Activated CD4-positive, alpha-beta T cell treated with anti-CD3 and anti-CD28 coated beads, Interleukin-2, amount 10 ng/mL, durations not matched to agents 24 days and 14 days (primary cell): ENCODE measurements at regions of chrX and their contacts with region 1.

Region 1: GRCh38 chrX:135432881-135433521 is 11.3 kb downstream of the SMIM10L2A start:
- DNase-seq: no peak
- H3K4me3 Mint-ChIP-seq: no peak overlapping the region
- H3K27ac Mint-ChIP-seq: no peak overlapping the region
- H3K4me1 Mint-ChIP-seq: peaks cover 10% of the 10 kb centered on the region
- H3K27me3 Mint-ChIP-seq: peaks cover 6% of the 10 kb centered on the region

Region 2: GRCh38 chrX:135384161-135384836 is 48.7 kb before region 1 on chrX:
- intact Hi-C with region 1: loop called (anchors 5 kb)
- DNase-seq: peak; percentile 85
- H3K4me3 Mint-ChIP-seq: peak overlapping the region; percentile 75
- H3K27ac Mint-ChIP-seq: peak overlapping the region; percentile 85
- H3K4me1 Mint-ChIP-seq: peaks cover 33% of the 10 kb centered on the region
- H3K27me3 Mint-ChIP-seq: no peaks in the 10 kb centered on the region

Region 3: GRCh38 chrX:135421537-135421931 is 11.5 kb before region 1 on chrX:
- intact Hi-C with region 1: no loop called
- DNase-seq: peak; percentile 97
- H3K4me3 Mint-ChIP-seq: peak overlapping the region; percentile 68
- H3K27ac Mint-ChIP-seq: no peak overlapping the region
- H3K4me1 Mint-ChIP-seq: peaks cover 7% of the 10 kb centered on the region
- H3K27me3 Mint-ChIP-seq: peaks cover 13% of the 10 kb centered on the region

Region 4: GRCh38 chrX:135454816-135455215 is 21.8 kb after region 1 on chrX:
- intact Hi-C with region 1: no loop called
- DNase-seq: no peak
- H3K4me3 Mint-ChIP-seq: no peak overlapping the region
- H3K27ac Mint-ChIP-seq: no peak overlapping the region
- H3K4me1 Mint-ChIP-seq: no peaks in the 10 kb centered on the region
- H3K27me3 Mint-ChIP-seq: peaks cover 5% of the 10 kb centered on the region

Region 5: DNA sequence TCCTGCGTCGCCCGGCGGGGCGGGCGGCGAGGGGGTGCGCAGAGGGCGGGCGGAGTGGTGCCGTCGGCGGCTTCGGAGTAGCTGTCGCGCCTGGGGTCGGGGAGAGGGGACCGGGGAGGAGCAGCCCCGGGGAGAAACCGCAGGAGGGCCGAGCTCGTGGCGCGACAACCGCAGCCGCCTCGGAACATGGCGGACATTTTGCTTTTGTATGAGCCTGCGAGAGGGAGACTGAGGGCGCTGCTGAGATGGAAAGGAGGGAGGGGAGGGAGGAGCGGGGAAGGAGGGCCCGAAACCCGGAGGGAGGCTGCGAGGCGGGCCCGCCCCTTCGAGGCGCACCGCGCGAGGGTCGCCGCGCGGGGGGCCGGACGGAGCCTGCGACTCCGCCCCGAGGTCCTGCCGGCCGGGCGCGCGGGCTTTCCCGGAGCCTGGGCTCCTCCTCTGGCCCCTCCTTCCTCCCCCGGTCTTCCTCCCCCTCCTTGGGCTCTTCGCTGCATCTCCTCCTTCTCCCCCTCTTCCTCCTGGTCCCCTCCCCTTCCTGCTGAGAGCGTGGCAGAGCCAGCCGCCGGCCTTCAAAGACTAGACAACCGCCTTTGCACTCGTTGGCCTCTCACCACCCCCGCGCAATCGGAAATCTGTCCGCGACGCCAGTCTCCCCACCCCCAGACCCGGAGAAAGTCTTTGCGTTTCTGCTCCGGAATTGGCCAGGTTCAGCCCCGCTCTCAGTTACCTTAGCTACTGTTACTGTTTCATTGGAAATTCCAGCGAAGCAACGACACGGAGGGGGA is 88.6 kb after region 1 on chrX:
- intact Hi-C with region 1: no loop called
- DNase-seq: peak; percentile 94
- H3K4me3 Mint-ChIP-seq: peak overlapping the region; percentile 92
- H3K27ac Mint-ChIP-seq: peak overlapping the region; percentile 99
- H3K4me1 Mint-ChIP-seq: peaks cover 31% of the 10 kb centered on the region
- H3K27me3 Mint-ChIP-seq: no peaks in the 10 kb centered on the region

Region 6: GRCh38 chrX:135707880-135708279 is 274.9 kb after region 1 on chrX:
- intact Hi-C with region 1: no loop called
- DNase-seq: peak; percentile 70
- H3K4me3 Mint-ChIP-seq: no peak overlapping the region
- H3K27ac Mint-ChIP-seq: no peak overlapping the region
- H3K4me1 Mint-ChIP-seq: no peaks in the 10 kb centered on the region
- H3K27me3 Mint-ChIP-seq: peaks cover 2% of the 10 kb centered on the region